ENCODE measurements at regions of chr7 and their contacts with region 1.

Region 1: DNA sequence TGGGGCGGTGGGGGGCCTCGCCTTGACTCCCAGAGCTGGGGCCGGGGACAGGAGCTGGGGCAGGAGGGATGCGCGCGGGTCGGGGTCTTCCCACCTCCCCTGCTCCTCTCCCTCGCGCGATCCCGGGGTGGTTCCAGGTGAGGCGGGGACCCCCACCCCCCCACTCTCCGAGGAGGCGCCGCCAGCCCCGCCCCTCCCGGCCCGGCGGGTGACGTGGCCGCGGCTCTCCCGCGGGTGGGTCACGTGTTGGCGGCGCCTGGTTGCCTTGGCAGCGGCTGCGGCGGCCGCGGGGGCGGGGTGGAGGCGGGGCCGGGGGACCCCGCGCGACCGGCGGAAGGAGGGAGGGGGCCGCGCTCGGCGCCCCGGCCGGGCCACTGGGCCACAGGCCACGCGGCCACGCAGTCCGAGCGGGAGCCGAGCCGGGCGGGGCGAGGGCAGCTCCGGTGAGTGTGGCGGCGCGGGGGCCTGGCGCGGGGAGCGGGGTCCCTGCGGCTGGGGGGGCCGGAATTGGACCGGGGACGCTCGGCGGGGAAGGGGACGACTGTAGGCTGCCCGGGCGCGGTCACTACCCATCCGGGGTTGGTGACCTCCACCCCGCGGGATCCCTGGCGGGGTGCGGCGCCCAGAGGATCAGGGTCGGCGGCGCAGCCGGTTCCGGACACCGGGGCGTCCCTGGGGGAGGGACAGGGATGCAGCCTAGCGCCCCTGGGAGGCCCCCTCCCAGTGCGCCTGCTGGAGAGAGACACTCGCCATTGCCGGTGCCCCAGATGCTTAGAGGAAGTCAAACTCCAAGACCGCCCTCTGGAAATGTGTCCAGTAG is at the start of gene ORAI2:
- DNase-seq: peak; percentile 68 to 80 (median 76)
- H3K4me3 ChIP-seq: peak within 1 kb of the TSS; percentile 64 to 88 (median 69)
- H3K4me3 Mint-ChIP-seq: peak within 1 kb of the TSS; percentile 83 to 92
- H3K27ac ChIP-seq: peak within 1 kb of the TSS; percentile 63 to 100
- H3K27ac Mint-ChIP-seq: peak within 1 kb of the TSS; percentile 66 to 98 (median 96)
- H3K4me1 ChIP-seq: peaks cover 56 to 63% of the 10 kb centered on the region in 2 donors
- H3K4me1 Mint-ChIP-seq: peaks cover 60% of the 10 kb centered on the region
- H3K27me3 ChIP-seq: no peaks in the 10 kb centered on the region
- H3K27me3 Mint-ChIP-seq: peaks cover 0 to 2% (median 1%) of the 10 kb centered on the region in 3 donors
- CTCF ChIP-seq: no peak
- polyA plus RNA-seq, gene ORAI2: 27.5 to 50.0 (median 38.2) TPM

Region 2: GRCh38 chr7:102211590-102212550 is 221.6 kb before region 1 on chr7:
- intact Hi-C with region 1: no loop called
- DNase-seq: no peak
- H3K4me3 ChIP-seq: no peak overlapping the region
- H3K4me3 Mint-ChIP-seq: no peak overlapping the region
- H3K27ac ChIP-seq: no peak overlapping the region
- H3K27ac Mint-ChIP-seq: peak overlapping the region in 1 of 7 donors; percentile 25
- H3K4me1 ChIP-seq: no peaks in the 10 kb centered on the region
- H3K4me1 Mint-ChIP-seq: no peaks in the 10 kb centered on the region
- H3K27me3 ChIP-seq: no peaks in the 10 kb centered on the region
- H3K27me3 Mint-ChIP-seq: peaks cover 0 to 4% (median 3%) of the 10 kb centered on the region in 3 donors
- CTCF ChIP-seq: no peak

Region 3: GRCh38 chr7:102407910-102408309 is 25.5 kb before region 1 on chr7:
- intact Hi-C with region 1: no loop called
- DNase-seq: no peak
- H3K4me3 ChIP-seq: no peak overlapping the region
- H3K4me3 Mint-ChIP-seq: no peak overlapping the region
- H3K27ac ChIP-seq: no peak overlapping the region
- H3K27ac Mint-ChIP-seq: peak overlapping the region in 1 of 7 donors; percentile 53
- H3K4me1 ChIP-seq: peaks cover 0 to 3% of the 10 kb centered on the region in 2 donors
- H3K4me1 Mint-ChIP-seq: peaks cover 7% of the 10 kb centered on the region
- H3K27me3 ChIP-seq: no peaks in the 10 kb centered on the region
- H3K27me3 Mint-ChIP-seq: no peaks in the 10 kb centered on the region
- CTCF ChIP-seq: no peak

Region 4: GRCh38 chr7:102421706-102422240 is 11.7 kb before region 1 on chr7:
- intact Hi-C with region 1: loop called in 1 of 2 experiments (anchors 2 kb)
- DNase-seq: no peak
- H3K4me3 ChIP-seq: no peak overlapping the region
- H3K4me3 Mint-ChIP-seq: no peak overlapping the region
- H3K27ac ChIP-seq: no peak overlapping the region
- H3K27ac Mint-ChIP-seq: peak overlapping the region in 3 of 7 donors; percentile 75 to 93 (median 90)
- H3K4me1 ChIP-seq: peaks cover 46 to 54% of the 10 kb centered on the region in 2 donors
- H3K4me1 Mint-ChIP-seq: peaks cover 51% of the 10 kb centered on the region
- H3K27me3 ChIP-seq: no peaks in the 10 kb centered on the region
- H3K27me3 Mint-ChIP-seq: peaks cover 0 to 5% (median 0%) of the 10 kb centered on the region in 3 donors
- CTCF ChIP-seq: no peak

Region 5: GRCh38 chr7:102473261-102473991 is 40.0 kb after region 1 on chr7:
- intact Hi-C with region 1: no loop called
- DNase-seq: no peak
- H3K4me3 ChIP-seq: no peak overlapping the region
- H3K4me3 Mint-ChIP-seq: no peak overlapping the region
- H3K27ac ChIP-seq: no peak overlapping the region
- H3K27ac Mint-ChIP-seq: peak overlapping the region in 3 of 7 donors; percentile 18 to 63 (median 42)
- H3K4me1 ChIP-seq: no peaks in the 10 kb centered on the region
- H3K4me1 Mint-ChIP-seq: peaks cover 2% of the 10 kb centered on the region
- H3K27me3 ChIP-seq: no peaks in the 10 kb centered on the region
- H3K27me3 Mint-ChIP-seq: peaks cover 0 to 2% (median 0%) of the 10 kb centered on the region in 3 donors
- CTCF ChIP-seq: no peak

Region 6: DNA sequence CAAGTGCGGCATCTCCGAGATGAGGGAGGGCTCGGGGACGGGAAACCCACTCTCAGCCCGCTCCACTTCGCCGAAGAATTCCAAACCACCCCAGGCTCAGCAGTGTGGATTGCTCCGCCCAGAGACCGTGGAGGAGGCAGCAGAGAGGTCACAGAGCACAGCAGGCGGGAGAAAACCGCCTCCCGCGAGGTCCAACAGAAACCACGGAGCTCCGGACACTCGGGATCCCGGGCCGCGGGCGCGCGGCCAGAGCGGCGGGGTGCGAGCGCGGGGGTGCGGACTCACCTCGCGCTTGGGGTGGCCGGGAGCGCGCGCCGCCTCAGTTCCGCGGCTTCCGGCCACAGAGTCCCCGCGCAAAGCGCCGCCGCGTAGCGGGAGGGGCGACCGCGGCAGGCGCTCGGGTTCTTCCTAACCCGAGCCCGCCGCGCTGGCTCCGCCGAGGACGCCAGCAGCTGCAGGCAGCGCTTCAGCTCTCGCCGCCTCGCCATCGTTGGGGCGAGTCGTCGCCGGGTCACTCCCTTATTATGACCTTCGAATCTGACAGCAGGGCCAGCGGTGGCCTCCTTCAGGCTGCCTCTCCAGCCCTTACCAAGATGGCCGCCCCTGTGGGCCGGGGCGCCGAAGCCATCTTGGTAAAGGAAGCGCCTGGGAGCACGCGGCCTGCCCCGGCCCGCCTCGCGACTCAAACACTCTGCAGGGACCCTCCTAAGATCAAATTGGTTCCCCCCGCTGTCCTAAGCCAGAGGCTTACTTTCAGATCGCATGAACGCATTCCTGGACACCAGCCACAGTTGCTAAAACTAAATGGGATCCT is 715.8 kb after region 1 on chr7 and contains the start of gene NAPEPLD:
- intact Hi-C with region 1: no loop called
- DNase-seq: peak; percentile 65 to 72 (median 67)
- H3K4me3 ChIP-seq: peak within 1 kb of the TSS; percentile 86 to 93 (median 90)
- H3K4me3 Mint-ChIP-seq: peak within 1 kb of the TSS; percentile 98 to 100
- H3K27ac ChIP-seq: peak within 1 kb of the TSS; percentile 75 to 86
- H3K27ac Mint-ChIP-seq: peak within 1 kb of the TSS; percentile 91 to 98 (median 92)
- H3K4me1 ChIP-seq: peaks cover 13 to 21% of the 10 kb centered on the region in 2 donors
- H3K4me1 Mint-ChIP-seq: peaks cover 33% of the 10 kb centered on the region
- H3K27me3 ChIP-seq: no peaks in the 10 kb centered on the region
- H3K27me3 Mint-ChIP-seq: peaks cover 2 to 5% (median 3%) of the 10 kb centered on the region in 3 donors
- CTCF ChIP-seq: no peak
- polyA plus RNA-seq, gene NAPEPLD: 1.1 to 2.2 (median 1.6) TPM